ENCODE measurements at regions of chrX and their contacts with region 1.

Region 1: DNA sequence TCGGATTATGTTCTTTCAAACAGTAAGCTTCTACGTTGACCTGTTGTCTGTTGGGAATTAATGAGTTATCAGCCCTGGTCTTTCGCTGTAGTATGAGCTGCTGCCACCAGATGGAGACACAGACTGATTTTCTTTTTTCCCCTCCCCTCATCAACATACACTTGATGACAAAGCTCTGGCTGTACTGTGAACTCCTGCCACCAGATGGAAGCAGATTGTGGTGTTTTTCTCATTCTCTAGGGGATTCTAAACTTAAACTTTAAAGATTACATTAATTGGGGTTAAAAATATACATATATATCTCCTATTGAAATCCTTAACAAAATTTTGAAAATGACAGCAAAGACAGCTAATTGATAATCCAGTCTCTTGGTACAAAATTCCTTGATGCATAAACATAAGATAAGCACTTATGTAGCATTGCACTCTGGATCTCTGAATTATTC is 44.8 kb downstream of the SMS start:
- DNase-seq: peak; percentile 74
- ATAC-seq: peak; percentile 87
- H3K4me3 Mint-ChIP-seq: no peak overlapping the region
- H3K27ac Mint-ChIP-seq: no peak overlapping the region
- H3K4me1 Mint-ChIP-seq: peaks cover 11% of the 10 kb centered on the region
- H3K27me3 Mint-ChIP-seq: no peaks in the 10 kb centered on the region

Region 2: DNA sequence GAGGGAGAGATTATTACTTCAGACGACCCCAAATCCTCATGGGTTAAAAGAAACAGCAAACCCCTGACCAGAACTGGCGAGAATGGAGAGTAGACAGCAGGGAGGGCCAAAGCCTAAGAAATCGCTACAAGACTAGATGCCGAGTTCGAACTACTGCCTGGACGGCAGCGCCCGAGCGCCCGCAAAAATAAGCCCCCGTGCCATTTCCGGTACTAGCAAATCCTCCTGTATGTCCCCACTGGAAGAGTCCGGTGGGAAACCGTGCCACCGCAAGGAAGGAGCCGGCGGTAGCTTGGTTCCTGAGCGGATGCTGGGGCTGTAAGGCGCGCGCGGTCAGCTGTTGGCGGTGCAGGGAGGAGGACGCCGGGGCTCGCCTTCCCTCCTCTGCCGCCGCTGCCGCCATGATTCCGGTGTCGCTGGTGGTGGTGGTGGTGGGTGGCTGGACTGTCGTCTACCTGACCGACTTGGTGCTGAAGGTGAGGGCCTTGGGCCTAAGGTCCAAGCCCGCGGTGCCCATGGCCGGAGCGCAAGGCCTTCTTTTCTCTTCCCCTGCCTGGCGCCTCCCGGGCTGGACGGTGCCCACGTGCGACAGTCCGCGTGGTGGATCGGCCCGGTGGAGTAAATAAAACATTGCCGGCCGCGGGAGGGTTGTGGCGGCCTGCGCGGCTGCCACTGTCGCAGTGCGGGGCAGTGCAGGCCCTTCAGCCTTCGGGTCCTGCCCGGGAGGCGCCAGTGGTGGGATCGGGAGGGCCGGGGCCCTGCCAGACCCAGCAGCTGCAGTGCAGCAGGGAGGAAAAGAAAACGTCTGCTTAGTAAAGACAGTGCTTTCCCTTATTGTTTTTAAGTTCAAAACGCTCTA is 145.8 kb before region 1 on chrX and contains the start of gene MBTPS2:
- CTCF ChIA-PET with region 1: interaction called, 10 read pairs
- POLR2A ChIA-PET with region 1: no interaction called
- DNase-seq: peak; percentile 87
- ATAC-seq: peak; percentile 96
- H3K4me3 Mint-ChIP-seq: peak within 1 kb of the TSS; percentile 88
- H3K27ac Mint-ChIP-seq: peak within 1 kb of the TSS; percentile 89
- H3K4me1 Mint-ChIP-seq: peaks cover 8% of the 10 kb centered on the region
- H3K27me3 Mint-ChIP-seq: no peaks in the 10 kb centered on the region
- total RNA-seq, gene MBTPS2: 8.1 to 8.5 TPM

Region 3: DNA sequence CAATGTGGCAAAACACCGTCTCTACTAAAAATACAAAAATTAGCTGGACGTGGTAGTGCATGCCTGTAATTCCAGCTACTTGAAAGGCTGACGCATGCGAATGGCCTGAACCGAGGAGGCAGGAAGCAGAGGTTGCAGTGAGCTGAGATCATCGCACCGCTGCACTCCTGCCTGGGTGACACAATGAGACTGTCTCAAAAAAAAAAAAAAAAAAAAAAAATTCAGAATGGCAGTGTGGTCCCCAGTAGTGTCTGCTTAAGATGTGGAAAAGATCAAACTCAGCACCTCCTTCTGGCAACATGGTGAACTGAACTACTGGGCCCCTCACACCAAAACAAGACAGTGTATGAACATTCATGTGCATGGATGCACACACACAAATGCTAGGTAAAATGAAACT is 12.6 kb before region 1 on chrX:
- CTCF ChIA-PET with region 1: interaction called, 36 read pairs
- POLR2A ChIA-PET with region 1: no interaction called
- DNase-seq: peak; percentile 66
- ATAC-seq: peak; percentile 89
- H3K4me3 Mint-ChIP-seq: peak overlapping the region; percentile 36
- H3K27ac Mint-ChIP-seq: peak overlapping the region; percentile 95
- H3K4me1 Mint-ChIP-seq: peaks cover 35% of the 10 kb centered on the region
- H3K27me3 Mint-ChIP-seq: no peaks in the 10 kb centered on the region

Region 4: GRCh38 chrX:22012051-22012450 is 26.7 kb after region 1 on chrX:
- CTCF ChIA-PET with region 1: no interaction called
- POLR2A ChIA-PET with region 1: no interaction called
- DNase-seq: no peak
- ATAC-seq: no peak
- H3K4me3 Mint-ChIP-seq: no peak overlapping the region
- H3K27ac Mint-ChIP-seq: no peak overlapping the region
- H3K4me1 Mint-ChIP-seq: peaks cover 8% of the 10 kb centered on the region
- H3K27me3 Mint-ChIP-seq: no peaks in the 10 kb centered on the region

Region 5: DNA sequence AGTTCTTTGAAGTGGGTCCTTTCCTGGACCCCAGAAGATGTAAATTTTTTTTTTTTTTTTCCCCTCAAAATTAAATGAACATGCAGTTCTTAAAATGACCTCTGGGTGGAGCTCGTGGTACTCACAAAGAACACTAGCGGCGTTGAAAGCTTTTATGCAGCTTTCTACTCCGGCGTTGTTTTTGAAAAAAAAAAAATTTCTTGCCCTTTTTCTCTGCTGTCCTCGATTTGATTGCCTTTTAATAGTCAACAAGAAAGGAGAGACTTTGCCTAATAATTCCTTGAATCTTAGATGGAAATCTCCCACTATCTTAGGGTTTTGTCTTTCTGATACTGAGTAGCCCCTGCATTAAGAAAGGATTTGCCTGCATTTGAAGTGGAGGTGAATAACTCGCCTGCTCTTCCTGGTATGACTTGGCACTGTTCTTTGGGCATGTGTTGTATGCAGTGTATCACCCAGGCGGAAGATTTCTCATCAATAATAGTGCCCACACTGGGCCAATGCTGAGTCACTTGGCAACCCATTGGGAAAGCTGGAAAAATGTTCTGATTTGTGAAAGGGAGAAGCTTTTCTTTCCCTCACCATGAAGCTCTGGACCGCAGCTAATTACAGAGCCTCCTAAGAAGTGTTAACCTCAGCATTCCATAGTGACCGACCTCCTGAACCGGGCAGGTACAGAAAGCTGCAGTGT is 150.8 kb after region 1 on chrX:
- CTCF ChIA-PET with region 1: interaction called, 35 read pairs
- POLR2A ChIA-PET with region 1: no interaction called
- DNase-seq: peak; percentile 44
- ATAC-seq: no peak
- H3K4me3 Mint-ChIP-seq: no peak overlapping the region
- H3K27ac Mint-ChIP-seq: no peak overlapping the region
- H3K4me1 Mint-ChIP-seq: no peaks in the 10 kb centered on the region
- H3K27me3 Mint-ChIP-seq: no peaks in the 10 kb centered on the region

Region 6: GRCh38 chrX:22192417-22193060 is 207.2 kb after region 1 on chrX:
- CTCF ChIA-PET with region 1: interaction called, 14 read pairs
- POLR2A ChIA-PET with region 1: no interaction called
- DNase-seq: peak; percentile 51
- ATAC-seq: no peak
- H3K4me3 Mint-ChIP-seq: no peak overlapping the region
- H3K27ac Mint-ChIP-seq: no peak overlapping the region
- H3K4me1 Mint-ChIP-seq: peaks cover 2% of the 10 kb centered on the region
- H3K27me3 Mint-ChIP-seq: no peaks in the 10 kb centered on the region